ENCODE measurements at regions of chr9 and their contacts with region 1.

Region 1: DNA sequence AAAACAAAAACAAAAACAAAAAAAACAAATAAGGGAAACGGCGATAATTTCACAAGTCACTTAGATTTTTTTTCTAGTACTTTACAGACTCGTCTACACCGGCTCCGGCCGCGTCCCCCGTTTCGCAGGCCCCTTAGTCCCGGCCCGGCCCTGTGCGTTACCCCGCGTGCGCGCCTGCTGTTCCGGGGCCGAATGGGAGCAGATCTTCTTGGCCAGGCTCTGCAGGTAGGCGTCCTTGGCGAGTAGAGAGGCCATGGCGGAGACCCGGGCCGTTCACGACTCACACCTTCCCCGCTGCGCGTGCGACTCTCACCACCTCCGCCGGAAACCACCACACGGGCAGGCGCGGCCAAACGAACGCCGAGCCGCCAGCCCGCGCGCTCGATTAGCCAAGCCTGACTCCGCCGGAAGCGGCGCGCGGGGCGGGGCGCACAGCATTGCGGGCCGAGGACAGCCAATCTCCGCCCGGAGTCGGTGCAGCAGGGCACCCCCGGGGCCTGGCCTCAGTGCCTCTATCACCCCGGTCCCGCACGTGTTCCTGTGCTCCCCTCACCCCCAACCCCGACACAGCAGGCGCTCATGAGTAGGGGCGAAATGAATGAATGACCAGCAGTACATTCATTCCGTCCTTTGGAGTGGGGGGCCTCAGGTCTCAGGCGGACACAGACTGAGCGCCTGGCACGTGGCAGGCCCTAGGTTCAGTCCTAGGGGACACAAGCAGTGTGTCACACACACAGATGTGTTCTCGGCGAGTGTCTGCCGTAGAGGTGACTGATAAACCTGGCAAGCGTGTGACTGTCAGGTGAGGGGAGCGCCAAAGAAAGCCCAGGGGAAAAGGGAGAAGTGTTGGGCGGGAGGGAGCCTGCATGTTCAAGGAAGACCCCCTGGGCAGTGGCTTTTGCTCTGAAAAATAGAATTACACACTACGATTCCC is at the start of gene SURF6:
- DNase-seq: peak; percentile 94
- ATAC-seq: peak; percentile 92
- H3K4me3 ChIP-seq: peak within 1 kb of the TSS; percentile 49 to 90 (median 82)
- H3K4me3 Mint-ChIP-seq: peak within 1 kb of the TSS; percentile 99
- H3K27ac ChIP-seq: peak within 1 kb of the TSS; percentile 76 to 78
- H3K27ac Mint-ChIP-seq: peak within 1 kb of the TSS; percentile 95
- H3K4me1 ChIP-seq: peaks cover 30 to 50% of the 10 kb centered on the region in 2 donors
- H3K4me1 Mint-ChIP-seq: peaks cover 53% of the 10 kb centered on the region
- H3K27me3 ChIP-seq: no peaks in the 10 kb centered on the region
- H3K27me3 Mint-ChIP-seq: no peaks in the 10 kb centered on the region
- CTCF ChIP-seq: no peak
- total RNA-seq, gene SURF6: 24.8 and 25.9 TPM in 2 replicates

Region 2: DNA sequence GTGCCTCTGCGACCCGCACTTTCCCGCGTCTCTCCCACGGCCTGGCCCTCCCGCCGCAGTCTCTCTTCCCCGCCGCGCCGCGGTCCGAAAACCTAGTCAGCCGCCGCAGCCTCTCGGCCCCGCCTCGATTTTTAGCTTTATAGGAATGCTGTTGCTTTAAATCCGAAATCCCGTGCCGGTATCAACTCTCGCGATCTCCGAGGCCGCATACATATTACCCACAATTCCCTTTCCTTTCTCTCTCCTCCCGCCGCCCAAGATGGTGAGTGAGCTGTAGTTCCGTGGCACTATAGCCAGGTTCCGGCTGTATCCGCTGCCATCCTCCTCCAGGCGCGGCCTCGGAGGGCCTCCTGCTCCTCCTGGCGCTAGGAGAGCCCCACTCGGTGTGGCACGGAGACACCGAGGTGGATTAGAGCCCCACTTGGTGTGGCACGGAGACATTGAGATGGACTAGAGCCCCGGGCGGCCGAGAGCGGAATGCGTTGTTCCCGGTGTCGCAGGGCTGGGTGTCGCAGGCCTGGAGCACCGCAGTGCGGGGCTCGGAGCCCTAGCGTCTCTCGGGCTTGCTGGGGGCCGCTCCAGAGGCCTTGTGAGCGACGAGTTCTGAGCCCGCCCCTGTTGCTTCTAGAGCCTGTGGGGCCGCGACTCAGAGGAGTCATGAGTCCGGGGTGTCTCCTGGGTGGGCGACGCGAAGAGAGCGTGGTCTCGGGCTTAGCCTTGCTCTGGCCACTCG is 12.0 kb after region 1 on chr9 and contains the starts of genes MED22 and RPL7A:
- CTCF ChIA-PET with region 1: interaction called, 5 read pairs
- POLR2A ChIA-PET with region 1: interaction called, 7 read pairs
- intact Hi-C with region 1: loop called (anchors 1 kb)
- DNase-seq: peak; percentile 97
- ATAC-seq: peak; percentile 83
- H3K4me3 ChIP-seq: peak within 1 kb of the TSS; percentile 86 to 96 (median 92)
- H3K4me3 Mint-ChIP-seq: peak within 1 kb of the TSS; percentile 97
- H3K27ac ChIP-seq: peak within 1 kb of the TSS; percentile 87 to 90
- H3K27ac Mint-ChIP-seq: peak within 1 kb of the TSS; percentile 95
- H3K4me1 ChIP-seq: peaks cover 21 to 25% of the 10 kb centered on the region in 2 donors
- H3K4me1 Mint-ChIP-seq: peaks cover 36% of the 10 kb centered on the region
- H3K27me3 ChIP-seq: no peaks in the 10 kb centered on the region
- H3K27me3 Mint-ChIP-seq: no peaks in the 10 kb centered on the region
- CTCF ChIP-seq: no peak
- total RNA-seq, gene MED22: 50.4 and 56.9 TPM in 2 replicates
- total RNA-seq, gene RPL7A: 2,342 and 2,407 TPM in 2 replicates

Region 3: GRCh38 chr9:133368249-133368881 is 32.2 kb after region 1 on chr9:
- CTCF ChIA-PET with region 1: no interaction called
- POLR2A ChIA-PET with region 1: no interaction called
- intact Hi-C with region 1: no loop called
- DNase-seq: no peak
- ATAC-seq: no peak
- H3K4me3 ChIP-seq: no peak overlapping the region
- H3K4me3 Mint-ChIP-seq: no peak overlapping the region
- H3K27ac ChIP-seq: no peak overlapping the region
- H3K27ac Mint-ChIP-seq: no peak overlapping the region
- H3K4me1 ChIP-seq: peaks cover 23 to 36% of the 10 kb centered on the region in 2 donors
- H3K4me1 Mint-ChIP-seq: peaks cover 46% of the 10 kb centered on the region
- H3K27me3 ChIP-seq: no peaks in the 10 kb centered on the region
- H3K27me3 Mint-ChIP-seq: no peaks in the 10 kb centered on the region
- CTCF ChIP-seq: no peak